Mucosa of descending colon (tissue), 3 donors: ENCODE measurements at regions of chr12 and their contacts with region 1.

Region 1: GRCh38 chr12:10661338-10661737 is 12.5 kb downstream of the STYK1 start:
- DNase-seq: peak in 1 of 3 donors; percentile 56
- ATAC-seq: peak; percentile 99
- H3K4me3 ChIP-seq: no peak overlapping the region
- H3K4me1 ChIP-seq: peaks cover 20% of the 10 kb centered on the region
- CTCF ChIP-seq: no peak

Region 2: GRCh38 chr12:10613349-10614055 is 47.8 kb before region 1 on chr12 and contains the start of gene MAGOHB:
- intact Hi-C with region 1: loop called in 1 of 2 experiments (anchors 10 kb)
- DNase-seq: peak; percentile 97 to 99 (median 98)
- ATAC-seq: peak; percentile 99
- H3K4me3 ChIP-seq: peak within 1 kb of the TSS; percentile 62
- H3K4me1 ChIP-seq: peaks cover 11% of the 10 kb centered on the region
- CTCF ChIP-seq: no peak
- total RNA-seq, gene MAGOHB: 9.6 to 14.7 (median 13.7) TPM

Region 3: GRCh38 chr12:10802587-10802986 is 141.2 kb after region 1 on chr12 and contains the start of gene TAS2R7:
- intact Hi-C with region 1: no loop called
- DNase-seq: no peak
- ATAC-seq: no peak
- H3K4me3 ChIP-seq: no peak within 1 kb of the TSS
- H3K4me1 ChIP-seq: no peaks in the 10 kb centered on the region
- CTCF ChIP-seq: no peak
- total RNA-seq, gene TAS2R7: not detected